ENCODE measurements at regions of chr1 and their contacts with region 1.

Region 1: DNA sequence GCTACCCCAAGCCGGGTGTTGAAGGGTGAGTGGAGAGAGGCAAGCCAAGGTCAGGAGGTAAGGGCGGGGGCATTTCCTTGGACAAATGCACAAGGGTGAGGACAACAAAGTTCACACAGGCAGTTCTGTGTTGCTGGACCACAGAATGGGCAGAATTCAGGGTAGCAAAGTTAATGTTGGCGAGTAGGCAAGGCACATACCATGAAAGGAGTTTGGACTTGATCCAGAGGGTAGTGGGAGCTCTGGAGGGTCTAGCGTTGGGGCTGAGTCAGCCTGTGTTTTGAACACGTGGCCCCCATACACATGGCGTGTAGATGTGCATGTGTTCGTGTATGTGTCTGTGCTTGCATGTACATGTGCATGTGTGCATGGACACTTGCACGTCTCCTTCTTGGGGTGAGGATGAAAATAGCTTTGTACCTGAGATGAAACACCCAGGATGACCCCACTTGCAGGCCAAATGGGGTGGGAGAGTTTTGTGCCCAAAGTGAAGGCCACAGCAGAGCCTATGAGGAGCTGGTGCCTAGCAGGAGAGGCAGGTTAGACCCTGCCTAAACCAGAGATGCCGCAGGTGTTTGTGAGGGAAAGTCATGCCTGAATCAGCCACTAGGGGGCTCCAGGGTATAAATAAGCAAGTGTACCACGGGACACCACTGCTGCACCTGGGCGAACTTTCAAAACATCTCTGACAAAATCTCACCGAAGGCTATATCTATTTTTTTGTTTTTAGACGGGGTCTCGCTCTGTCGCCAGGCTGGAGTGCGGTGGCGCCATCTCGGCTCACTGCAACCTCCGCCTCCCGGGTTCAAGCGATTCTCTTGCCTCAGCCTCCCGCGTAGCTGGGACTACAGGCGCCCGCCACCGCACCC is 21.8 kb downstream of the SLC27A3 start:
- DNase-seq: peak; percentile 73 to 90
- H3K4me3 ChIP-seq: no peak overlapping the region
- H3K27ac ChIP-seq: no peak overlapping the region
- H3K4me1 ChIP-seq: no peaks in the 10 kb centered on the region
- H3K27me3 ChIP-seq: no peaks in the 10 kb centered on the region
- CTCF ChIP-seq: peak; percentile 81 to 88 (median 88)
- POLR2A ChIP-seq: no peak

Region 2: DNA sequence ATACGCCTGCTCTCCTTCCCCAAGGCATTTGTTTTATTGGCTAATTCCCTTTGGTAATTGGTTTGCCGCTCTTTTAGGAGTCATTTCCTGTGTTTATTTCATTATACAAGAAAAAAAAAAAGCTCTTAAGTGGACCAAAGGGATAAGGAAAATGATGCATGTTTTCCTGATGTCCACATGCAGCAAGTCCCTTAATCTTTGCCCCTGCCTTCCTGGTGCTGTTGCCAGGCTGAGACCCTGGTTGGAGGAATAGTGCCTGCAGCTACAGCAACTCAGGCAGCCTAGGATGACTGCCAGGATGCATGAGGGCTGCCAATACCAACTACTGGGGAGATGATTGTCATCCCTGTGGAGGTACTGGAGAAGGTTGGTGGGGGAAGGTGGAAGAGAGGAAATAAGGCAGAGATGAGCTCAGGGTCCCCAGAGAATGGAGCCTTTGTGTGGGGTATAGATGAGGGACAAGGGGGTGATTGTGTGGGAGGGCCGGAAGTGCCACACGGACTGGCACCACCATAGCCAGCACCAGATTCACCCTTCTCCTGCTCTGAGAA is 131.8 kb after region 1 on chr1:
- intact Hi-C with region 1: no loop called
- DNase-seq: peak in 1 of 2 donors; percentile 11
- H3K4me3 ChIP-seq: no peak overlapping the region
- H3K27ac ChIP-seq: no peak overlapping the region
- H3K4me1 ChIP-seq: no peaks in the 10 kb centered on the region
- H3K27me3 ChIP-seq: no peaks in the 10 kb centered on the region
- CTCF ChIP-seq: no peak
- POLR2A ChIP-seq: no peak

Region 3: DNA sequence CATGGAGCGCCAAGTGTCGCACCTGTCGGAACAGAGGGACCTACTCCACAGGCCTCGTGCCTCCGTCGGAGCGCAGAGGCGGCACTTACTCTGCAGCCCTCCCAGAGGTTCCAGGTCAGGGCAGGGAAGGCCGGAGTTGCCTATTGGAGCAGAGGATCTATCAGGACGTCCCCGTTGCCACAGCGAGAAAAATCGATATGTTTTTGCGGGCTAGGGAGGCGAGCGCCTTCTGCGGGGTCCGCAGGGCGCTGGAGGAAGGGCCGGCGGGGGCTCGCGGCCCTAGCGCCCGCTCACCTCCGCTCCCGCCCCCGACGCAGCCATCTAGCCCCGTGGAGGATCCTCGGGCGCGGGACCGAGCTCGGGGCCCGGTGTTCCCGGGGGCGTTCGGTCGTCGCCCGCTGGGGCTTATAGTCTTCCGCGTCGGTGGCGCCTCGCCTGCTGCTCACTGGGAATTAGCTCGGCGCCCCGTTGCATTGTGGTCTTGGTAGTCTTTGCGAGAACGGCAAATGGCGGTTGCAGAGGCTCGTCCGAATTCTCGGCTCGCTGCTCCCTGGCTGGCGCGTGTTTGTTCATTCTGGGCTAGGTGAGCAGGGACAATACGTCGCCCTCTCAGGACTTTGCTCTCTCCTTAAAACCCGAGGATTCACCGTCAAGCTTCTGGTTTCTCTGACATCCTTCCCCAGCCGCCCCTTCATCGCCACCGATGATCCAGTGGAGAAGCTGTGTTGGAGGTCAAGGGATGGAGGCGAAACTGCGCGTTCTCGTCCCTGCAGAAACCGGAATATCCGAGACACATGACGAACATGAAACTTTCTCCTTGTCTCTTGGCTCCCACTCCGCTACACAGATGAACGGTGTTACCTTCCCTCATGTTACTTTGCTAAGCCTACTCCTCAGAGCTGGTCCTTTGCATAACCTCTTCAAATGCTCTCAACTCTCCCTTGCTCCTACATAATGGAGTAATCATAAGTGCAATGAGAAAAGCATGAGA is 180.5 kb after region 1 on chr1 and contains the start of gene JTB:
- intact Hi-C with region 1: loop called (anchors 10 kb)
- DNase-seq: peak; percentile 82 to 86
- H3K4me3 ChIP-seq: peak within 1 kb of the TSS; percentile 94 to 98
- H3K27ac ChIP-seq: peak within 1 kb of the TSS; percentile 93 to 94
- H3K4me1 ChIP-seq: peaks cover 0 to 7% of the 10 kb centered on the region in 2 donors
- H3K27me3 ChIP-seq: no peaks in the 10 kb centered on the region
- CTCF ChIP-seq: peak in 2 of 4 experiments; percentile 22 to 25
- POLR2A ChIP-seq: peak; percentile 87 to 90
- total RNA-seq, gene JTB: 91.1 to 253 (median 175) TPM

Region 4: GRCh38 chr1:153990468-153991150 is 193.6 kb after region 1 on chr1 and contains the start of gene RPS27:
- intact Hi-C with region 1: loop called (anchors 5 kb)
- DNase-seq: peak; percentile 87 to 96
- H3K4me3 ChIP-seq: peak within 1 kb of the TSS; percentile 74 to 99
- H3K27ac ChIP-seq: peak within 1 kb of the TSS; percentile 94 to 99
- H3K4me1 ChIP-seq: peaks cover 0 to 16% of the 10 kb centered on the region in 2 donors
- H3K27me3 ChIP-seq: no peaks in the 10 kb centered on the region
- CTCF ChIP-seq: peak in 2 of 4 experiments; percentile 30 to 33
- POLR2A ChIP-seq: peak; percentile 94 to 98
- total RNA-seq, gene RPS27: 826 to 6,388 (median 2,664) TPM

Measured in uterus (tissue), 4 donors.